ENCODE measurements at regions of chr3 and their contacts with region 1.

Region 1: GRCh38 chr3:16290007-16290826 is 25.2 kb downstream of the OXNAD1 start:
- DNase-seq: peak; percentile 81
- H3K4me3 Mint-ChIP-seq: peak overlapping the region; percentile 84
- H3K27ac Mint-ChIP-seq: peak overlapping the region; percentile 97
- H3K4me1 Mint-ChIP-seq: peaks cover 85% of the 10 kb centered on the region
- H3K27me3 Mint-ChIP-seq: no peaks in the 10 kb centered on the region

Region 2: DNA sequence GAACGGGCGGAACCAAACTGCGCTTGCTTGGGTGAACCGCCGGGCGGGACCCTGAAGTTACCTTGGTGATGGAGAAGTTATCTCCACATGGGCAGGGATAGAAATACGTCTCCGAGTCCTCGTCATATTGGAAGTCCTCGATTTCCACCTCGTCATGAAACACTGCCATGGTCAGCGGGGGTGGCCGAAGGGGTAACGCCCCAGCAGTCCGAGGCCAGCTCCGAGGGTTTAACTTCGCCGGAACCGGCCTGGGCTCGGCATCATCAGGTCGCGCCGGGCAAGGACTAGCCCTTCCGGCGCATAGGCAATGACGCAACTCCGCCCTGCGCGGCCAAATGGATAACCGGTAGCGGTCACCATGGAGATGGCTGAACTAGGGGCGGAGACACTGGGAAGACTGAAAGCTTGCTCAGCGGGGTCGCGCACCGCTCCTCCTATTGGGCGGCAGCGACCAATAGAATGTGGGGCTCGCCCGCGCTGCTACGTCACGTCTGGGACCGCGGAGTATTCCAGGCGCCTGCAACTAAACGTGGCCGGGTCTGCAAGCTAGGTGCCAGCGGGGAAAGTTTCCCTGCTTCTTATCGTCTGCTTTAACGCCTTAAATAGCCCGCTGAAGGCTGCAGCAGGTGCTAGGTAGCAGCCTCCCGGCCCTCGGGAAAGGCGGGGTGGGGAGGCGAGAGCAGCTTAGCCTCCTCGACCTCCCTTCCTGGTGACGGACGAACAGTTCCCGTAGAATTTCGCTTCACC is 25.3 kb before region 1 on chr3 and contains the starts of genes DPH3 and OXNAD1:
- CTCF ChIA-PET with region 1: interaction called, 38 read pairs
- intact Hi-C with region 1: loop called (anchors 1 kb)
- DNase-seq: peak; percentile 100
- H3K4me3 Mint-ChIP-seq: peak within 1 kb of the TSS; percentile 96
- H3K27ac Mint-ChIP-seq: peak within 1 kb of the TSS; percentile 94
- H3K4me1 Mint-ChIP-seq: peaks cover 31% of the 10 kb centered on the region
- H3K27me3 Mint-ChIP-seq: no peaks in the 10 kb centered on the region
- total RNA-seq, gene DPH3: 16.1 to 17.0 TPM
- total RNA-seq, gene OXNAD1: 32.4 to 34.2 TPM

Region 3: GRCh38 chr3:16309558-16309957 is 19.3 kb after region 1 on chr3:
- CTCF ChIA-PET with region 1: interaction called, 222 read pairs
- intact Hi-C with region 1: loop called (anchors 1 kb)
- DNase-seq: peak; percentile 76
- H3K4me3 Mint-ChIP-seq: peak overlapping the region; percentile 22
- H3K27ac Mint-ChIP-seq: peak overlapping the region; percentile 92
- H3K4me1 Mint-ChIP-seq: peaks cover 91% of the 10 kb centered on the region
- H3K27me3 Mint-ChIP-seq: no peaks in the 10 kb centered on the region

Region 4: DNA sequence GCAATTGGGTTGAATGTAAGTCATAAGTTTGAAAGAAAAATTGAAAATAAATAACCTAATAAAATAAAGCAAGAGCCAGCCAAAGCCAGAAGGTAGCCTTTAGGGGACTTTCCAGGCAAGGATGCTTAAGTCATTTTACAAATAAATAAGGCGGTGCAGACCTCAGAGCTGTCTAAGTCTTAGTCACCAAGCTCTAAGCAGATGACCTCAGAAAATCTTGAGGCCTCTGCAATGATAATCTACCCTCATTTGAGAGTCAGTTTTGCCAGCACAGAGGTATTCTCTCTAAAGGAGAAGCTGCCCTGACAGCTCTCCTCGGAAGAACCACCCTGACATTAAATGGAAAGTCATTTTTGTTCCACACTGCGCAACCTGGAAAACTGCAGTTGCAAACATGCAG is 88.7 kb after region 1 on chr3:
- CTCF ChIA-PET with region 1: interaction called, 4 read pairs
- intact Hi-C with region 1: loop called (anchors 1 kb)
- DNase-seq: peak; percentile 44
- H3K4me3 Mint-ChIP-seq: no peak overlapping the region
- H3K27ac Mint-ChIP-seq: peak overlapping the region; percentile 80
- H3K4me1 Mint-ChIP-seq: peaks cover 82% of the 10 kb centered on the region
- H3K27me3 Mint-ChIP-seq: no peaks in the 10 kb centered on the region

Region 5: DNA sequence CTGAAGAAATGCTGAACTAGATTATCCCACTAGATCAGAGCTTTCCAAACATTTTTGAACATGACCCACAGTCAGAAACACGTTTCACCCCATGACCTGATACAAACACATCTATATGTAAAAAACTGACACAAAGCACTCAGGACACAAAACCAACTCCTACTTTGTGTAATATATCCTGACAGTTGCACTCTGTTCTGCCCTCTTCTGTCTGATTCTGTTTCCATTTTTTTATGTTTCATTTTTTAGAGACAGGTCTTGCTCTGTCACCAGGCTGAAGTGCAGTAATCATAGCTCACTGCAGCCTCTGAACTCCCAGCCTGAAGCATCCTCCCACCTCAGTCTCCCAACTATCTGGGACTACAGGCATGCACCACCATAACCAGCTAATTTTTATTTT is 239.0 kb after region 1 on chr3:
- CTCF ChIA-PET with region 1: interaction called, 8 read pairs
- intact Hi-C with region 1: loop called (anchors 1 kb)
- DNase-seq: no peak
- H3K4me3 Mint-ChIP-seq: no peak overlapping the region
- H3K27ac Mint-ChIP-seq: no peak overlapping the region
- H3K4me1 Mint-ChIP-seq: peaks cover 9% of the 10 kb centered on the region
- H3K27me3 Mint-ChIP-seq: no peaks in the 10 kb centered on the region

Region 6: GRCh38 chr3:16884084-16884747 is 594.0 kb after region 1 on chr3:
- CTCF ChIA-PET with region 1: no interaction called
- intact Hi-C with region 1: loop called (anchors 2 kb)
- DNase-seq: peak; percentile 80
- H3K4me3 Mint-ChIP-seq: peak overlapping the region; percentile 86
- H3K27ac Mint-ChIP-seq: peak overlapping the region; percentile 95
- H3K4me1 Mint-ChIP-seq: peaks cover 14% of the 10 kb centered on the region
- H3K27me3 Mint-ChIP-seq: no peaks in the 10 kb centered on the region

Region 7: DNA sequence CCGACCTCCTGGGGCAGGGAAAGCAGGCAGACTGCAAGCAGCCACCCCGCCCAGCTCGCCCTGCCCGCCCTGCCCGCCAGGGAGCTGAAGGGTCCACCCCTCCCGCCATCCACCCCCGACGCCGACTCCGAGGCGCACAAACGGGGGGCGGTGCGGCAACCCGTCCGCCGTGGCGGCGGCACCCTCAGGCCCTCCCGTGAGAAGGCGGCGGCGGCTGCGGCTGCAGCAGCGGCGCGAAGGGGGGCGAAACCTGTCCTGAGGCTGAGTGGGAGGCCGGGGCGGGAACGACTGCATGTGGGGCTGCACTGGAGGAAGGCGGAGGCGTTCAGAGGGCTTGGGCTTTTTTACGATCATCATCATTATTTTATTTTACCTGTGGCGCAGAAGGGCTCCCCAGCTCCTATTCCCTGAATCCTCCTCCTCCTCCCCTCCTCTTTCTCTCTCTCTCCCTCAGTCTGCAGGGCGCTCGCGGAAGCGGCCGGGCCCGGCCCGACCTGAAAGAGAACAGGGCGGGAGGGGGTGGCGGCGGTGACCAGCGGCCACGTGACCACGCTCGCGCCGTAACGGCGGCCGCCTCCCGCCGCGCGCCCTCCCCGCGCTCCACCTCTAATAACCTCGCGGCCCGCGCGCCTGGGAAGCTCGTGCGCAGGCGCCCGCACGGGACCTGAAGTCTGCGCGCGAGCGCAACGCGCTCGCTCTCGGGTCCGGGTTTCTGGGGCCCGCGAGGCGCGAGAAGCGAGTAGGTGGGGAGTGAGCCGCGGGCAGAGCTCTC is 1452.1 kb after region 1 on chr3 and contains the start of gene TBC1D5:
- CTCF ChIA-PET with region 1: no interaction called
- intact Hi-C with region 1: loop called (anchors 2 kb)
- DNase-seq: peak; percentile 95
- H3K4me3 Mint-ChIP-seq: peak within 1 kb of the TSS; percentile 92
- H3K27ac Mint-ChIP-seq: peak within 1 kb of the TSS; percentile 94
- H3K4me1 Mint-ChIP-seq: peaks cover 40% of the 10 kb centered on the region
- H3K27me3 Mint-ChIP-seq: no peaks in the 10 kb centered on the region
- total RNA-seq, gene TBC1D5: 54.4 to 57.2 TPM